ENCODE measurements at regions of chr3 and their contacts with region 1.

Region 1: GRCh38 chr3:53130179-53131061 is at the start of gene RFT1:
- DNase-seq: peak; percentile 98
- H3K4me3 ChIP-seq: peak within 1 kb of the TSS; percentile 71 to 97 (median 87)
- H3K27ac ChIP-seq: peak within 1 kb of the TSS; percentile 94 to 97
- H3K4me1 ChIP-seq: peaks cover 15 to 31% (median 25%) of the 10 kb centered on the region in 4 experiments
- H3K27me3 ChIP-seq: no peaks in the 10 kb centered on the region

Region 2: DNA sequence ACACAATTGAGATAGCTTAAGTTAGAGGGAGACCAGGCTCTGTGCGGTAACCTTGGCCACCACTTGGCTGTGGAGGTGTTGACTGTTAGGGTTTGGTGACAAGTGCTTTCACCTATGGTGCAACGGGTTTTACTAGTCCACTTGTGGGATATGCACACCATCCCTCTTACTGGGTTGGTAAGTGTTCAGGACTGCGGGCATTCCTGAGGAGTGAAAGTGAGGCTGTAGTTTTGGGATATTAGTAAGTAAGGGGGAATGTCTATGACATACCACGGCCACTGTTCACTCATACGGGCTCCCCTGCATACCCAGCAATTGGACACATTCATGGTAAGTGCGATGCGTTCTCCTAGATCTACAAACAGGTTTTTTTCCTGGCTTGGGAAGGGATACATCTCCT is 1599.9 kb before region 1 on chr3:
- CTCF ChIA-PET with region 1: no interaction called
- POLR2A ChIA-PET with region 1: interaction called, 10 read pairs
- DNase-seq: no peak
- H3K4me3 ChIP-seq: no peak overlapping the region
- H3K27ac ChIP-seq: no peak overlapping the region
- H3K4me1 ChIP-seq: no peaks in the 10 kb centered on the region
- H3K27me3 ChIP-seq: no peaks in the 10 kb centered on the region

Region 3: DNA sequence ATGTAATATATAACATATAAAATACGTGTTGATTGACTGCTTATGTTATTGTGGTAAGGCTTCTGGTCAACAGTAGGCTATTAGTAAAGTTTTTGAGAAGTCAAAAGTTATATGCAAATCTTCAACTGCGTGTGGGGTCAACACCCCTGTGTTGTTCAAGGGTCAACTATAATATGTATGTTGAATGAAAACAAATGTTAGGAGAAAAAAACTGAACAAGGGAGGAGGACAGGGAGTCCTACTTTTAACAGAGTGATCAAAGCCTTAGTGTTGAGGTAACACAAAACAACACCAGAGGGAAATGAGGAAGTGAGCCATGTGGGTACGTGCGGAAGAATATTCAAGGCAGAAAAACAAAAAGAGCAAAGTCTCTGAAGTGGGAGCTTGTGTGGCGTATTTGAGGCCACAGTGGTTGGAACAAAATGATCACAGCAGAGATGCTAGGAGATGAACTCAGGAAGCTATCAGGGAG is 147.0 kb before region 1 on chr3:
- CTCF ChIA-PET with region 1: no interaction called
- POLR2A ChIA-PET with region 1: no interaction called
- DNase-seq: peak; percentile 29 to 84 (median 77)
- H3K4me3 ChIP-seq: peak overlapping the region in 1 of 7 experiments; percentile 53
- H3K27ac ChIP-seq: peak overlapping the region in 1 of 2 experiments; percentile 29
- H3K4me1 ChIP-seq: peaks cover 7 to 17% (median 10%) of the 10 kb centered on the region in 4 experiments
- H3K27me3 ChIP-seq: peaks cover 0 to 4% (median 1%) of the 10 kb centered on the region in 5 experiments

Region 4: DNA sequence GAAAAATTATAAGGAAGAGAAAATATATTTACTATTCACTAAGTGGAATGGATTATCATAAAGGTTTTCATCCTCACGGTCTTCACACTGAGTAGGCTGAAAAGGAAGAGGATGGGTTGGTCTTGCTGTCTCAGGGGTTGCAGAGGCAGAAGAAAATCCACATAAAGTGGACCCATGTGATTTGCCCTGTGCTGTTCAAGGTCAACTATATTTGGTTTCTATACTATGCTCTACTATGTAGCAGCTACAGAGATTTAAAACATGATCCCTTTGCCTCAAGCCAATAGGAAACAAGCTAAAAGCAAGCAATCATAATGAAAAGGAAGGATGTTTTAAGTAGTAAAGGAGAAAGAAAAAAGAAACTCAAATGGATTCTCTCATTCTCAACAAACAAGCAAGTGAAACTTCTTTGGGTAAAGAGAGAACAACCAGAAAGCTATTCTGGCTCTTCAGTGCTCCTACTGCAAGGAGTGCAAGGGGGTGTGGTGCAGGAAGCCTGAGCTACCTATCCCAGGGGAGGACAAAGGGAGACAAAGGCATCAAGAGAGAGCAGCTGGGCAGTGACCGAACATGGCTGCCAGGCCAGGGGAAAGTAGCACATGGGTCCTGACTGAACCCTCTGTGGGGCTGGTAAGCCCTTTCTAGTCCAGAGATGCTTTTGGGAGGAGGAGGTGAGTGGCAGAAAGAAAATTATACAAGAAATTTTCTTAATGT is 120.4 kb before region 1 on chr3:
- CTCF ChIA-PET with region 1: no interaction called
- POLR2A ChIA-PET with region 1: no interaction called
- DNase-seq: no peak
- H3K4me3 ChIP-seq: no peak overlapping the region
- H3K27ac ChIP-seq: no peak overlapping the region
- H3K4me1 ChIP-seq: no peaks in the 10 kb centered on the region
- H3K27me3 ChIP-seq: peaks cover 0 to 52% (median 18%) of the 10 kb centered on the region in 5 experiments

Region 5: GRCh38 chr3:53140847-53141845 is 10.7 kb after region 1 on chr3:
- CTCF ChIA-PET with region 1: interaction called, 70 read pairs
- POLR2A ChIA-PET with region 1: no interaction called
- DNase-seq: peak in 2 of 3 donors; percentile 43 to 45
- H3K4me3 ChIP-seq: no peak overlapping the region
- H3K27ac ChIP-seq: no peak overlapping the region
- H3K4me1 ChIP-seq: peaks cover 5 to 55% (median 8%) of the 10 kb centered on the region in 4 experiments
- H3K27me3 ChIP-seq: no peaks in the 10 kb centered on the region

Region 6: GRCh38 chr3:53160660-53161449 is 30.4 kb after region 1 on chr3 and contains the start of gene PRKCD:
- CTCF ChIA-PET with region 1: interaction called, 31 read pairs
- POLR2A ChIA-PET with region 1: no interaction called
- DNase-seq: peak; percentile 51 to 79 (median 75)
- H3K4me3 ChIP-seq: peak within 1 kb of the TSS; percentile 61 to 83 (median 73)
- H3K27ac ChIP-seq: no peak within 1 kb of the TSS
- H3K4me1 ChIP-seq: peaks cover 2 to 73% (median 39%) of the 10 kb centered on the region in 4 experiments
- H3K27me3 ChIP-seq: peaks cover 0 to 29% (median 8%) of the 10 kb centered on the region in 5 experiments

Region 7: DNA sequence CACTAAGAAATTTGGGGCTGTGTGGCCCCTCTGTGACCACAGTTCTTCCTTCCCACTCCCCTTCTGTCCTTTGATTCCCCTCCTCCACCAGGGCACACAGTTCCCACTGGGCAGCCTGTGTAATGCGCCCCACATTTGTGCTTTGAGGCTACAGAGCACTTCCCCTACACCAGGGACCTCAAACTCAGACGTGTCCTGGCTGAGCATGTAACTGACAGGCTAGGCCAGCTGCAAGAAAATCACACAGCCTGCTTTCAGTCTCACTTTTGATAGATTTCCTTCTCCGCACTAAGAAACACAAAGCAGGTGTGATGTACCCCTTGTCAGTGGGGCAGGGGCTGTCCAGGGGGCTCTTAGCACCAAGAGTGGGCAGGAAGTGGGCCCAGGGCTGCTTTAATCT is 60.2 kb after region 1 on chr3:
- CTCF ChIA-PET with region 1: interaction called, 125 read pairs
- POLR2A ChIA-PET with region 1: interaction called, 3 read pairs
- DNase-seq: no peak
- H3K4me3 ChIP-seq: no peak overlapping the region
- H3K27ac ChIP-seq: no peak overlapping the region
- H3K4me1 ChIP-seq: peaks cover 0 to 8% (median 3%) of the 10 kb centered on the region in 4 experiments
- H3K27me3 ChIP-seq: no peaks in the 10 kb centered on the region

Measured in common myeloid progenitor, CD34-positive (primary cell).